Panc1 (cell line): ENCODE measurements at regions of chr22 and their contacts with region 1.

Region 1: DNA sequence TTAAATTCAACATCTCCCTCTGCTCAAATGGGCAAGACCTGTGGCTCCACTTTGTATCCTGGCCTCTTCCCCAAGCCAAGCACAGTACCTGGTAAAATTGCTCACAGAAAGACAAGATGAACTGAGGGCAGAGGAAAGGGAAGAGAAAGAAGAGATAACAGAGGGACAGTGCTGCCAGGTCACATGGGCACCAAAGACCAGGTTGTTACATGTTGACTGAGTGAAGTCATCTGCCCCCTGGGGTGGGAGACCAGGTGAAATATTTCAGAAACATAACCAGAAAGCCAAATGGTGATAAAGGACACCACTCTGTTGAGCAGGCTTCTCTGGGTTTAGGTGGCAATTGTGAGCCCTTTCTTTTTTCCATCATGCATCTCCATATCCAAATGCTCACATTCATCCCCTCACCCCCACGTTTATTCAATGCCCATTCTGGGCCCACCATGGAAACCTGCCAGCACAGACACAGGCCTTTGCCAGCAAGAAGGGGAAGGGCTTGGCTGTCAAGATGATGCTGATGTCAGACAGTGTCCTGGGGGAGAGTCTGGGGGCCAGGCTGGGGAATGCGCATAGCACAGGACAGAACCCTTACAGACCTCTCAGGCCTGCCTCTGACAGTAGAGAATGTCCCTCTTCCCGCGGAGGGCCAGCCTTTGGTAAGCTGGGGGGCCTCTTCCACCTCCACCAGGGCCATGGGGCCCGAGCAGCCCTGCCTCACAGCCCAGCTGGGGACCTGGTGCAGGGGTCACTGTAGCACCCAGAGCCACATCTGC is 51.6 kb downstream of the DGCR2 start:
- DNase-seq: no peak
- ATAC-seq: no peak
- H3K4me3 ChIP-seq: no peak overlapping the region
- H3K27ac ChIP-seq: no peak overlapping the region
- H3K4me1 ChIP-seq: no peaks in the 10 kb centered on the region
- H3K27me3 ChIP-seq: no peaks in the 10 kb centered on the region
- CTCF ChIP-seq: no peak

Region 2: DNA sequence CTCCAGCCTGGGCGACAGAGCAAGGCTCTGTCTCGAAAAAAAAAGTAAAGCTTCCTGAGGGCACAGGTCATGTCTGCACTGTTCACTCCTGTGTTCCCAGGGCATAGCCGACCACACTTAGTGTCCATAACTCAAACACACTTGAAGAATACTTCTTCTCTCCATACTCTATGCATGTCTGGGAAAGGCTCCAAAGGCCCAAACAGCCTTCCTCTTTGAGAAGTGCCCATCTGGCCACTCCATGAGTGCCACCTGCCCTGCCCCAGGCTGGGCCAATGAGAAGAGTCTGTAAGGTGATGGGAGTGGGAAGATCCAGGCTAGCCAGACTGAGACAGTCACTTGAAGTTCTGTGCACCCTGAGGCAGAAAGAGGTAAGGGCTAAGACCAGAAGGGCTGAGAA is 26.9 kb after region 1 on chr22:
- CTCF ChIA-PET with region 1: no interaction called
- POLR2A ChIA-PET with region 1: no interaction called
- in situ Hi-C with region 1: no loop called
- intact Hi-C with region 1: no loop called
- DNase-seq: no peak
- ATAC-seq: no peak
- H3K4me3 ChIP-seq: no peak overlapping the region
- H3K27ac ChIP-seq: no peak overlapping the region
- H3K4me1 ChIP-seq: no peaks in the 10 kb centered on the region
- H3K27me3 ChIP-seq: no peaks in the 10 kb centered on the region
- CTCF ChIP-seq: no peak

Region 3: GRCh38 chr22:19291580-19292457 is 221.2 kb after region 1 on chr22 and contains the start of gene CLTCL1:
- CTCF ChIA-PET with region 1: no interaction called
- POLR2A ChIA-PET with region 1: no interaction called
- in situ Hi-C with region 1: no loop called
- intact Hi-C with region 1: loop called (anchors 10 kb)
- DNase-seq: no peak
- ATAC-seq: peak; percentile 84
- H3K4me3 ChIP-seq: peak within 1 kb of the TSS; percentile 75 to 88
- H3K27ac ChIP-seq: peak within 1 kb of the TSS; percentile 86
- H3K4me1 ChIP-seq: peaks cover 9% of the 10 kb centered on the region
- H3K27me3 ChIP-seq: no peaks in the 10 kb centered on the region
- CTCF ChIP-seq: no peak
- total RNA-seq, gene CLTCL1: 11.9 TPM